PC-3 (cell line): ENCODE measurements at regions of chr14 and their contacts with region 1.

Region 1: GRCh38 chr14:61761959-61762786 is at the start of gene SNAPC1:
- DNase-seq: peak; percentile 100
- ATAC-seq: peak; percentile 86
- H3K4me3 ChIP-seq: peak within 1 kb of the TSS; percentile 96
- H3K27ac ChIP-seq: peak within 1 kb of the TSS; percentile 55
- H3K4me1 ChIP-seq: peaks cover 32% of the 10 kb centered on the region
- H3K27me3 ChIP-seq: no peaks in the 10 kb centered on the region
- CTCF ChIP-seq: no peak
- total RNA-seq, gene SNAPC1: 26.7 and 27.3 TPM in 2 replicates

Region 2: DNA sequence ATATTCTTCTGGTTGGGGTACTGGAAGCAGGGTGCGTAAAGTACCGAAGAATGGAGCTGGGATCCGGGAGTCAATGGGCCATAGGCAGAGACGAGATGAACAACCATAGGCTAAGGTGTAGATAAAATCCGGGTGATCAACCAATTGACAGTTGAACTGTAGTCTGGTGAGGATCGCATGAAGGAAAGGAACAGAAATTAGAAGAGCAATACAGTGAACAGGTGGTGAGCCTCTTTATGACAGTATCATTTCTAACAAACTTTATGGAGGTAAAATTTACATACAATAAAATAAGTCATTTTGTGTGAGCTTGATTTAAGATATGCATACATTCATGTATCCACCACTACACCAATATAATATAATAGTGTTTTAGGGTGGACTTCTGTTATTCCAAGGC is 80.8 kb before region 1 on chr14:
- CTCF ChIA-PET with region 1: no interaction called
- POLR2A ChIA-PET with region 1: no interaction called
- intact Hi-C with region 1: no loop called
- DNase-seq: no peak
- ATAC-seq: no peak
- H3K4me3 ChIP-seq: no peak overlapping the region
- H3K27ac ChIP-seq: no peak overlapping the region
- H3K4me1 ChIP-seq: no peaks in the 10 kb centered on the region
- H3K27me3 ChIP-seq: no peaks in the 10 kb centered on the region
- CTCF ChIP-seq: no peak

Region 3: DNA sequence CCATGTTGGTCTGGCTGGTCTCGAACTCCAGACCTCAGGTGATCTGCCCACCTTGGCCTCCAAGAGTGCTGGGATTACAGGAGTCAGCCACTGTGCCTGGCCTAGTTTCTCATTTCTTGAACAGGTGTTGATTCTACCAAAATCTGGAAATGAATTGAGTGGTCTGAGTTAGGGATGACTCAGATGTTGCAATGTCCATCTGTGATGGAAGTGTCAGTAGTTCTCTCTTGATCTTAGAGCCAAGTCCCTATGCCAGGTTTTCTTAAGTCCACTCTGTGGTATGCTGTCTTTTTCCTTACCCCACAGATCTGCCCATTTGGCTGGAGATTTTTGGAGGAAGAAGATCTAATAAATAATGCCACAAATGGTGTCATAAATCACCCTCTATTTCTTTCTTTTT is 12.7 kb after region 1 on chr14:
- CTCF ChIA-PET with region 1: no interaction called
- POLR2A ChIA-PET with region 1: no interaction called
- intact Hi-C with region 1: no loop called
- DNase-seq: peak; percentile 35
- ATAC-seq: peak; percentile 60
- H3K4me3 ChIP-seq: no peak overlapping the region
- H3K27ac ChIP-seq: no peak overlapping the region
- H3K4me1 ChIP-seq: peaks cover 4% of the 10 kb centered on the region; the same call in 1 of the 2 replicates
- H3K27me3 ChIP-seq: no peaks in the 10 kb centered on the region
- CTCF ChIP-seq: no peak

Region 4: DNA sequence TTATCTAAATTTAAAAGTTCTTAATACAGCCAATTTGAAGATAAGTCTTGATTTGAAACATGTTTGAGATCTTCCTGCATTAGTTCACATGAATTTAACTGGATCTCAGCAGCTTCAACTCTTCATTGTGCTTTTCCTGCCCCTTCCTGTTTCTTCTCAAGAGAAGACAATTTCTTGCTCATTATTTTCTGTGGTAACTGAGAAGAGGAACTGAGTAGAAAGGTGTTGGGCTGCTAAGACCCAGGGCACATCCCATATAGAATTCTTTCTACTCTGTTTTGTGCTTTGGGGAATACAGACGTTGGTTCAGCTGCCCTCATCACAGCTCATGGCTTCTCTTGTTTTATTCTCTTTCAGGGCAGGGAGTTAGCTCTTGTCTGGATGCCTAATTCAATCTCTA is 110.3 kb after region 1 on chr14:
- CTCF ChIA-PET with region 1: no interaction called
- POLR2A ChIA-PET with region 1: no interaction called
- intact Hi-C with region 1: no loop called
- DNase-seq: no peak
- ATAC-seq: no peak
- H3K4me3 ChIP-seq: no peak overlapping the region
- H3K27ac ChIP-seq: no peak overlapping the region
- H3K4me1 ChIP-seq: peaks cover 7% of the 10 kb centered on the region
- H3K27me3 ChIP-seq: no peaks in the 10 kb centered on the region
- CTCF ChIP-seq: no peak

Region 5: GRCh38 chr14:62015945-62016344 is 253.8 kb after region 1 on chr14:
- CTCF ChIA-PET with region 1: no interaction called
- POLR2A ChIA-PET with region 1: no interaction called
- intact Hi-C with region 1: loop called (anchors 5 kb)
- DNase-seq: peak; percentile 35
- ATAC-seq: peak; percentile 20
- H3K4me3 ChIP-seq: no peak overlapping the region
- H3K27ac ChIP-seq: no peak overlapping the region
- H3K4me1 ChIP-seq: peaks cover 8% of the 10 kb centered on the region; the same call in 1 of the 2 replicates
- H3K27me3 ChIP-seq: no peaks in the 10 kb centered on the region
- CTCF ChIP-seq: no peak